Naive thymus-derived CD4-positive, alpha-beta T cell (primary cell): ENCODE measurements at regions of chr18 and their contacts with region 1.

Region 1: DNA sequence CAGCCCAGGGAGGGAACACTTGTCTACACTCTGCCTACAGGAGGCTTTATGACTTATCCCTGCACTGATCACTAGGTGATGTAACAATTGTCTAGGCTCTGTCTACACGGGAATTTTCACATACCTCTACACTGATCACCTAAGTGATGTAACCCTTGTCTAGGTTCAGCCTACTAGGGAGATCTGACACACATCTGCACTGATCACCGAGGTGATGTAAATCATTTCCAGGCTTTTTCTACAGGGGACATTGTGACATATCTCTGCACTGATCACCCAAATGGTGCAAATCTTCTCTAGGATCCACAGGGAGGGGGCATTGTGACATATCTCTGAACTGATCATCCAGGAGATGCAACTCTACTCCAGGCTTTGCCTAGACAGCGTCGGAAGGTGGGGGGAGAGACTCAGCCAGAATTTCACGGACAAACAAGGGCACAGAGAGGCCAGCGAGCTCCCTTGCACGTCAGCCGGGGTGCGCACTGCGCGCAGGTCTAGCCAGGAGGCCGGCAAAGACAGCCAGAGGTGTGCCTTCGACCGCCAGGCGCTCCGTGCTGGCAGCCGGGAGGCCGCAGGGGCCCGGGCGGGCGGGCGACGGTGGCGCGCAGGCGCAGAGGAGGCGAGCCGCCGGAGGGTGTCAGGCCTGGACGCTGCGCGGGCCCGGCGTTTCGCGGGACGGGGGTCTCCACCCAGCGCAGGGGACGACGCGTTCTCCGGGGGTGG is 46.9 kb upstream of the USP14 start:
- DNase-seq: peak; percentile 60 to 77 (median 75)
- ATAC-seq: no peak
- H3K4me3 ChIP-seq: peak overlapping the region; percentile 36
- H3K4me3 Mint-ChIP-seq: peak overlapping the region; percentile 79 to 91 (median 89)
- H3K27ac ChIP-seq: peak overlapping the region; percentile 82
- H3K27ac Mint-ChIP-seq: peak overlapping the region; percentile 85 to 99 (median 90)
- H3K4me1 ChIP-seq: peaks cover 0 to 5% of the 10 kb centered on the region in 2 donors
- H3K4me1 Mint-ChIP-seq: peaks cover 4 to 14% (median 7%) of the 10 kb centered on the region in 7 donors
- H3K27me3 ChIP-seq: no peaks in the 10 kb centered on the region
- H3K27me3 Mint-ChIP-seq: peaks cover 0 to 3% (median 0%) of the 10 kb centered on the region in 5 donors

Region 2: GRCh38 chr18:140670-141266 is 29.3 kb after region 1 on chr18:
- CTCF ChIA-PET with region 1: no interaction called
- POLR2A ChIA-PET with region 1: no interaction called
- intact Hi-C with region 1: no loop called
- DNase-seq: no peak
- ATAC-seq: no peak
- H3K4me3 ChIP-seq: no peak overlapping the region
- H3K4me3 Mint-ChIP-seq: no peak overlapping the region
- H3K27ac ChIP-seq: no peak overlapping the region
- H3K27ac Mint-ChIP-seq: no peak overlapping the region
- H3K4me1 ChIP-seq: no peaks in the 10 kb centered on the region
- H3K4me1 Mint-ChIP-seq: peaks cover 0 to 4% (median 0%) of the 10 kb centered on the region in 7 donors
- H3K27me3 ChIP-seq: no peaks in the 10 kb centered on the region
- H3K27me3 Mint-ChIP-seq: peaks cover 0 to 16% (median 0%) of the 10 kb centered on the region in 5 donors

Region 3: DNA sequence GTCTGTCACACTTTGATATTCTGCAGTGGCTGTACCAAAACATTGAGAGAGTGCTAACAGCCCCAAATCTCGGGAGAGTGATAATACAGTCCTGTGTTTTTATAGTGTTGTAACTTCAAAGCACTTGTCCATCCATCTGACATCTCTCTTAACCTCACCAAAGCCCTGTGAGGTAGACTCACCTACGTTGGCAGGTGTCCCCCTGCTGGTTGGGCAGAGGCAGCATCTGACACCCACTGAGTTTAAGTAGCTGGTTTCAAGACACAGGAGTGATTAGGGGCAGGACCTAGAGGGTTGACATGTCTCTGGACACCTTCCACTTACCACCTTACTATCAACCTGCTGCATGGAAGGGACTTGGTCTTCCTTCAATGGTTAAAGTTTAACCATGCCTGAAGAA is 366.1 kb after region 1 on chr18:
- CTCF ChIA-PET with region 1: no interaction called
- POLR2A ChIA-PET with region 1: no interaction called
- intact Hi-C with region 1: loop called in 1 of 2 experiments (anchors 5 kb)
- DNase-seq: peak in 2 of 9 donors; percentile 1 to 3
- ATAC-seq: no peak
- H3K4me3 ChIP-seq: no peak overlapping the region
- H3K4me3 Mint-ChIP-seq: no peak overlapping the region
- H3K27ac ChIP-seq: no peak overlapping the region
- H3K27ac Mint-ChIP-seq: no peak overlapping the region
- H3K4me1 ChIP-seq: no peaks in the 10 kb centered on the region
- H3K4me1 Mint-ChIP-seq: no peaks in the 10 kb centered on the region
- H3K27me3 ChIP-seq: no peaks in the 10 kb centered on the region
- H3K27me3 Mint-ChIP-seq: peaks cover 0 to 27% (median 8%) of the 10 kb centered on the region in 5 donors